Activated CD4-positive, alpha-beta T cell treated with anti-CD3 and anti-CD28 coated beads, Interleukin-2, amount 10 ng/mL, durations not matched to agents 24 days and 14 days (primary cell): ENCODE measurements at regions of chr2 and their contacts with region 1.

Region 1: DNA sequence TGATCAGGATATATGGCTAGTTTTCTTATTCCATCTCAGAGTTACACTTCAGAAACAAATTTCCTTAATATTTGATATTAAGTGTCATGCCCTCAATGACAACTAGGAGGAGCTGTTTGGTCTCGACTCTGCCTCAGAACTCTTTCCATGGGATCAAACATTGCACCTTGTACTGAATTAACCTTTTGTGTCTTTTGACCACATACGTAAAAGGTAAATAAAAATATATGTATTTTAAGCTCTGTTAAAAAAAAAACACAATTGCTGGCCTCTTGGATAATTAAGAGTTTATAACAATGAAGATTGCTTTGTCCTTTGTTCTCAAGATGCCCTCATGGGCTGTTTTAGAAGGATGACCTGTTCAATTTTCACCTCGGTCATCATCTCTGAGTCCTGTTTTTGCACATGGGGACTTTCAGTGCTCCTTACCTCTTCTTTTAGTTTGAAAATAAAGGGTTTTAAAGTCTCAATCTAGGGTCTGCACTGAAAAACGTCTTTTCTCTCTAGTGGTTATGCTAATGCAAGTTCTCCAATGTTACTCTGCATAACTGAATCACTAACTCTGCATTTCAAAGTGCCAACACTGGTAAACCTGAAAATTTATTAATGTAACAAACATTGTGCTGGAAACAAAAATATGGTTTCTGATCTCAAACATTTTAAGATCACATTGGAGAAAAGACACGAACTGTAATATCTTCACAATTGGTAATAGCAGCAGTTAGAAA is 18.8 kb upstream of the FN1 start:
- DNase-seq: no peak
- H3K4me3 Mint-ChIP-seq: no peak overlapping the region
- H3K27ac Mint-ChIP-seq: no peak overlapping the region
- H3K4me1 Mint-ChIP-seq: no peaks in the 10 kb centered on the region
- H3K27me3 Mint-ChIP-seq: peaks cover 19% of the 10 kb centered on the region

Region 2: DNA sequence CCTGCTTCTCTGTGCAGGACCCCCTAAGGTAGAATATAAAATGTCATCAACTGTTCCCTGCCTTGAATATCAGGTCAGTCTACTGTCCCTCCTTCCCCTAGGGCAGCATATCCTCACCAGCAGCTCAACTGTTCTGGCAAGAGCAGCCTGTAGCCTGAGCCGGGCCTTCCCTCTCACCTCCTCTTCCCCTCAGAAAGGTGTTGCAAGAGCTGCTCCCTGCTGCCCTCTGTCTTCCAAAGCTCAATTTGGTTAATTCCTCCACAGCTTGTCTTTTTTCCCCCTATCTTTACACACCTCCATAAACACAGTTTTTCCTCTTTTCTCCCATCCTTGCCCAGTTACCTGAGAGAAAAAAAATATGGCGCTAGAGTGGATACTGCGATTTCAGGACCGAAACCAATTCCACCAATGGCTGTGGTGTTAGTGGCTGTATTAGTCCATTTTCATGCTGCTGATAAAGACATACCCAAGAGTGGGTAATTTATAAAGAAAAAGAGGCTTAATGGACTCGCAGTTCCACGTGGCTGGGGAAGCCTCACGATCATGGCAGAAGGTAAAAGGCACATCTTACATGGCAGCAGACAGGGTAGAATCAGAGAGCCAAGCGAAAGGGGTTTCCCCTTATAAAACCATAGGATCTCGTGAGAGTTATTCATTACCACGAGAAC is 374.0 kb after region 1 on chr2:
- intact Hi-C with region 1: loop called (anchors 5 kb)
- DNase-seq: peak; percentile 77
- H3K4me3 Mint-ChIP-seq: no peak overlapping the region
- H3K27ac Mint-ChIP-seq: no peak overlapping the region
- H3K4me1 Mint-ChIP-seq: peaks cover 9% of the 10 kb centered on the region
- H3K27me3 Mint-ChIP-seq: peaks cover 10% of the 10 kb centered on the region

Region 3: GRCh38 chr2:215920244-215921100 is 465.8 kb after region 1 on chr2:
- intact Hi-C with region 1: loop called (anchors 1 kb)
- DNase-seq: peak; percentile 86
- H3K4me3 Mint-ChIP-seq: no peak overlapping the region
- H3K27ac Mint-ChIP-seq: no peak overlapping the region
- H3K4me1 Mint-ChIP-seq: peaks cover 4% of the 10 kb centered on the region
- H3K27me3 Mint-ChIP-seq: peaks cover 1% of the 10 kb centered on the region